IMR-90 (cell line): ENCODE measurements at regions of chr7 and their contacts with region 1.

Region 1: DNA sequence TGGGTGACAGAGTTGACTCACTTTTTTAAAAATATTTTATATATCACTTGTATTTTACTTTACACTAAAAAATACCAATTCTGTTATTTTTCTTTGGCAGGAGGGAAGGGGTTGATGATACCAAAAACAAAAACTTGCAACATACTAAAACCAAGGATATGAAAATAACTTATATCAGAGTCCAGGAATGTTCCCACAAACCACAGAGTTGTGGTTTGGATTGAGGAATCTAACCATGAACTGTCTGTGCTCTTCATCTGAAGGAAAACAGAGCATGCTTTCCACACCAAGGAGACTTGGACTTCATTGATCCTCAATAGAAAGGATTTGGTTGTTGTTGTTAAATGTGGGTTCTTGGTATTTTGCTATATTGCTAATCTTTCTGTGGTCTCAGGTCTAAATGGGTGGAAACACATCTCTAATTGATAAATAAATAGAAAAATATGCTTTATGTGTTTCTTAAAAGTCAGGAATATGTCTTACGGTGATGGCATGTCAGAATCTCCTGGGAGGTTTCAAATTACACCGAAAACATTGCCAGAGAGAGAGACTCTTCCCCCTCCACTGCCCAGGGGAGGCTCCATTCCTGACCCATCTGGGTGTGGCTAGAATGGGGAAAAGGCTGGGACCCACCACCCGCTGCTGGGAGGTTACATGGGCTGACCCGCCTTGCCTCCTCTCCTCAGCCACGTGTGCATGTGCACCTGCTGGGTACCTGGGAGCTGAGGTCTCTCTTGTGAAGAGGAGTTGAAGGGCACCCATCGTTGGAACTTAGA is 46.9 kb upstream of the STK17A start:
- DNase-seq: peak; percentile 91
- ATAC-seq: peak; percentile 84
- H3K4me3 ChIP-seq: no peak overlapping the region
- H3K27ac ChIP-seq: peak overlapping the region; percentile 73; the same call in 1 of the 2 replicates
- H3K4me1 ChIP-seq: peaks cover 34% of the 10 kb centered on the region
- H3K27me3 ChIP-seq: peaks cover 30% of the 10 kb centered on the region
- CTCF ChIP-seq: no peak
- POLR2A ChIP-seq: no peak
- RAD21 ChIP-seq: no peak

Region 2: DNA sequence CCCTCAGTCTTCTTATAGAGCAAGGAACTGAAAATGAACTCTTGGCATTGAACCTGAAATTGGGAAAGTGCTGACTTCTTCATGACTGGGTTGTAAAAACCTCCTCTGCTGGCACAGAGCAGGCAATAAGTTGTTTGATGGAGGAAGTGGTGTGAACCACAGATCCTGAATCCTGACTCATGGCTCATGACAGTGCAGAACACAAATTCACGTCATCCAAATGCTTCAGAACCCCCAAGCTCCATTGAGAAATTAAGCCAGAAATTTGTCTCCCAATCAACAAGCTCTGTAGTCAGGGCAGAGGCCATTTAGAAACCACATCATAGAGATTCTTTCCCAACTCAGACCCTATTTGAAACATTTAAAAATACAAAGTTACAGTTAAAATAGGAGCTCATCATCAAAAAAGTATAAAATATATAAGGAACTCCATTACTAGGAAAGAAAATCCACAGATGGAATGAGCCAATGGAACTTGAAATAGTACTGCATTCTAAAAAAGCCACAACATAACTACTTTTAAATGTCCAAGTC is 36.6 kb after region 1 on chr7:
- CTCF ChIA-PET with region 1: no interaction called
- POLR2A ChIA-PET with region 1: no interaction called
- dilution Hi-C with region 1: no loop called
- in situ Hi-C with region 1: no loop called
- intact Hi-C with region 1: loop called (anchors 1 kb)
- DNase-seq: peak; percentile 100
- ATAC-seq: peak; percentile 80
- H3K4me3 ChIP-seq: no peak overlapping the region
- H3K27ac ChIP-seq: peak overlapping the region; percentile 83; the same call in 1 of the 2 replicates
- H3K4me1 ChIP-seq: peaks cover 9% of the 10 kb centered on the region
- H3K27me3 ChIP-seq: no peaks in the 10 kb centered on the region
- CTCF ChIP-seq: no peak
- POLR2A ChIP-seq: no peak
- RAD21 ChIP-seq: peak; percentile 4; the same call in 1 of the 2 replicates

Region 3: DNA sequence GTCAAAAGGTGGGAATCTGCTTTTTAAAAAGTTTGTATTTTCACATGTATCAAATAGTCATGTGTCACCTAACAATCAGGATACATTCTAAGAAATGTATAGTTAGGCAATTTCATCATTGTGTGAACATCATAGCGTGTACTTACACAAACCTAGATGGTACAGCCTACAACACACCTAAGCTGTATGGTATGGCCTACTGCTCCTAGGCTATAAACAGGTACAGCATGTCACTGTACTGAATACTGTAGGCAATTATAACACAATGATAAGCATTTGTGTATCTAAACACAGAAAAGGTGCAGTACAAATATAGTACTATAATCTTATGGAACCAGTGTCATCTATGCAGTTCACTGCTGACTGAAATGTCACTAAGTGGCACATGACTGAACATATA is 175.5 kb after region 1 on chr7:
- CTCF ChIA-PET with region 1: no interaction called
- POLR2A ChIA-PET with region 1: no interaction called
- dilution Hi-C with region 1: no loop called
- in situ Hi-C with region 1: no loop called
- intact Hi-C with region 1: no loop called
- DNase-seq: no peak
- ATAC-seq: no peak
- H3K4me3 ChIP-seq: no peak overlapping the region
- H3K27ac ChIP-seq: no peak overlapping the region
- H3K4me1 ChIP-seq: no peaks in the 10 kb centered on the region
- H3K27me3 ChIP-seq: no peaks in the 10 kb centered on the region
- CTCF ChIP-seq: no peak
- POLR2A ChIP-seq: no peak
- RAD21 ChIP-seq: no peak

Region 4: GRCh38 chr7:44221231-44221791 is 685.3 kb after region 1 on chr7:
- CTCF ChIA-PET with region 1: no interaction called
- POLR2A ChIA-PET with region 1: no interaction called
- dilution Hi-C with region 1: no loop called
- in situ Hi-C with region 1: no loop called
- intact Hi-C with region 1: no loop called
- DNase-seq: no peak
- ATAC-seq: peak; percentile 36; the same call in 1 of the 2 replicates
- H3K4me3 ChIP-seq: no peak overlapping the region
- H3K27ac ChIP-seq: no peak overlapping the region
- H3K4me1 ChIP-seq: no peaks in the 10 kb centered on the region
- H3K27me3 ChIP-seq: peaks cover 37% of the 10 kb centered on the region
- CTCF ChIP-seq: peak; percentile 28
- POLR2A ChIP-seq: no peak
- RAD21 ChIP-seq: no peak

Region 5: GRCh38 chr7:44845451-44845850 is 1309.5 kb after region 1 on chr7:
- CTCF ChIA-PET with region 1: no interaction called
- POLR2A ChIA-PET with region 1: no interaction called
- dilution Hi-C with region 1: no loop called
- in situ Hi-C with region 1: no loop called
- intact Hi-C with region 1: no loop called
- DNase-seq: no peak
- ATAC-seq: no peak
- H3K4me3 ChIP-seq: no peak overlapping the region
- H3K27ac ChIP-seq: no peak overlapping the region
- H3K4me1 ChIP-seq: 0 out of 2 replicates have a peak, but pooled peaks cover 1% of the 10 kb centered on the region
- H3K27me3 ChIP-seq: no peaks in the 10 kb centered on the region
- CTCF ChIP-seq: no peak
- POLR2A ChIP-seq: no peak
- RAD21 ChIP-seq: no peak